H1 (cell line): ENCODE measurements at regions of chr9 and their contacts with region 1.

Region 1: GRCh38 chr9:121322037-121322775 is 47.8 kb downstream of the STOM start:
- DNase-seq: no peak
- H3K4me3 ChIP-seq: no peak overlapping the region
- H3K27ac ChIP-seq: no peak overlapping the region
- H3K4me1 ChIP-seq: no peaks in the 10 kb centered on the region
- H3K27me3 ChIP-seq: no peaks in the 10 kb centered on the region
- CTCF ChIP-seq: no peak
- EP300 ChIP-seq: no peak
- POLR2A ChIP-seq: no peak
- RAD21 ChIP-seq: no peak

Region 2: GRCh38 chr9:121267689-121268597 is 54.3 kb before region 1 on chr9 and contains the start of gene GSN:
- CTCF ChIA-PET with region 1: interaction called, 11 read pairs
- POLR2A ChIA-PET with region 1: no interaction called
- DNase-seq: peak in 1 of 2 experiments; percentile 86
- H3K4me3 ChIP-seq: peak within 1 kb of the TSS; percentile 63 to 94 (median 72)
- H3K27ac ChIP-seq: no peak within 1 kb of the TSS
- H3K4me1 ChIP-seq: peaks cover 4 to 31% (median 12%) of the 10 kb centered on the region in 4 experiments
- H3K27me3 ChIP-seq: peaks cover 0 to 30% (median 22%) of the 10 kb centered on the region in 4 experiments; a peak in 6 of 7 replicates
- CTCF ChIP-seq: peak in 2 of 3 experiments; percentile 0 to 32; a peak in 2 of 4 replicates
- EP300 ChIP-seq: no peak
- POLR2A ChIP-seq: 0 out of 3 replicates have a peak, but pooled peaks of 1 of the 2 experiments have one; percentile 8
- RAD21 ChIP-seq: peak in 1 of 2 experiments; percentile 7; a peak in 2 of 4 replicates
- total RNA-seq, gene GSN: 49.7 and 52.3 TPM in 2 replicates

Region 3: DNA sequence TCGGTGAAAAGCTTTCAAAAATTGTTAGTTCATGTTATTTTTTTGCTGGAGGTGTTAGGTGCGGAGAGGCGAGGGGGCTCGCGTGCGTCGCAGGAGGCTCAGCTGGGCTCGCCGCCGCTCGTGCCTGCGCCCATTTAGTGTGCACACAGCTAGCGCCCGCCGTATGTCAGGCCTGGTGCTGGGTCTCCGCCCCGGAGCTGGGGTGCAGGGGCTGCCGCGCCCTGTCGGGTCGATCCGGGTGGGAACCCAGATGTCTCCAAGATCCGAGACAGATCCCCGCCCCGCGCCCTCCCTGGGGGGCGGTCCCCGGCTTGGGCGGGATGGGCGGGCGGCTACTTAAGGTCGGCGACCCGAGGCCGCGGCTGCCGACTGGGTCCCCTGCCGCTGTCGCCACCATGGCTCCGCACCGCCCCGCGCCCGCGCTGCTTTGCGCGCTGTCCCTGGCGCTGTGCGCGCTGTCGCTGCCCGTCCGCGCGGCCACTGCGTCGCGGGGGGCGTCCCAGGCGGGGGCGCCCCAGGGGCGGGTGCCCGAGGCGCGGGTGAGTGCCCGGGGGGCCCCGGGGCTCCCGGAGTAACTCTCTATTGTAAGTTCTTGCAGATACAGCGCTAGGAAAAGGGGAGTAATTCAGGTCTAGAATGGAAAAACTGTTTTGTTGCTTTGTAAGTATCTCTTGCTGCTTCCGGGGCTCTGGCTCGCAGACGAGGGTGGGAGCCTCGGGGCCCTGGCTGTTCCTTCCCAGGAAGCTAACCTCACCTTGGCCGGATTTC is 22.6 kb before region 1 on chr9:
- CTCF ChIA-PET with region 1: interaction called, 35 read pairs
- POLR2A ChIA-PET with region 1: no interaction called
- DNase-seq: peak in 1 of 2 experiments; percentile 62
- H3K4me3 ChIP-seq: peak overlapping the region; percentile 29 to 63 (median 38)
- H3K27ac ChIP-seq: no peak overlapping the region
- H3K4me1 ChIP-seq: peaks cover 5 to 19% (median 12%) of the 10 kb centered on the region in 4 experiments
- H3K27me3 ChIP-seq: peaks cover 5 to 20% (median 14%) of the 10 kb centered on the region in 4 experiments
- CTCF ChIP-seq: no peak
- EP300 ChIP-seq: no peak
- POLR2A ChIP-seq: no peak
- RAD21 ChIP-seq: no peak

Region 4: DNA sequence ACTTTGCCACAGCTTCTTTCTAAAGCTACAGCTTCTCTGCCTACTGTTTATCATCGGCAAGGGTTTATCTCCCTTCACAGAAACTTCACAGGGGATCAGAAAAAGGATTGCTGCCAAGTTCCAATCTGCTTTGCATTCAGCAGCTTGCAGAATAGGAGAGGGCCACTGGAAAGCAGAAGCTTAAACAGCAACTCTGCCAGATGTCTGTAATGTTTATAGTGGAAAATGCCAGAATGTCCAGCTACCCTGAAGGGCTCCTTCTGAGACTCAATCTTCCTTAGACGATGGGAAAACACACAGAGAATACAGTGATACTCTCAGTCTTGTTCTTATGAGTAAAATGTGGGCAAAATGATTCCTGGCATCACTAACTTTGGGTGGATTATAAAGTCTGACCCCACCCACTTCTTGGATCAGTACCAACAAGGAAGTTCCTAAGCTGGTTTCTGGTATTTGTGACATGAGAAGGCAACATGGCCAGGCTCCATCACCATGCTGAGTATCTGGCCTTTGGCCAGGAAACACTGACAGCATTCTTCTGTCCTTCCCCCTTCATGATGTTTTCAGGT is 28.9 kb after region 1 on chr9:
- CTCF ChIA-PET with region 1: interaction called, 59 read pairs
- POLR2A ChIA-PET with region 1: no interaction called
- DNase-seq: no peak
- H3K4me3 ChIP-seq: no peak overlapping the region
- H3K27ac ChIP-seq: no peak overlapping the region
- H3K4me1 ChIP-seq: peaks cover 0 to 5% (median 0%) of the 10 kb centered on the region in 4 experiments; a peak in 1 of 7 replicates
- H3K27me3 ChIP-seq: no peaks in the 10 kb centered on the region
- CTCF ChIP-seq: no peak
- EP300 ChIP-seq: no peak
- POLR2A ChIP-seq: no peak
- RAD21 ChIP-seq: no peak

Region 5: DNA sequence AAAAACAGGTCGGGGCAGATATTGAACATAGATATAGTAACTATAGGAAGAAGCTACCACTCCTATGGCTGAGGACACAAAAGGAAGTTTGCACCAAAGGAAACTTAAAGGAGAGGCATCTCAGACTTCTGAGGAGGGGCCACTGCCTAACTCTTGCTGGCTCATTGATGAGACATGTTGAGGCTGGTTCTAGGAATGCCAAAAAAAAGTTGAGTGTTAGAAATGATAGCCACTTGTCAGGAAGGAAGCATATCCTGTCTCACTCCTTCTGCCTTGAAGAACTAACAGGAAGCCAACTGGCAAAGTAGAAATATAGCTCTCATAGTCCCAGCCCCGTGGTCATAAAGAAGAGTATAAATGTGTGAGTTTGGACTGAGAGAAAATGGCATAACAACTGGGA is 71.1 kb after region 1 on chr9:
- CTCF ChIA-PET with region 1: interaction called, 197 read pairs
- POLR2A ChIA-PET with region 1: no interaction called
- DNase-seq: no peak
- H3K4me3 ChIP-seq: no peak overlapping the region
- H3K27ac ChIP-seq: no peak overlapping the region
- H3K4me1 ChIP-seq: peaks cover 0 to 4% (median 0%) of the 10 kb centered on the region in 4 experiments; a peak in 2 of 7 replicates
- H3K27me3 ChIP-seq: no peaks in the 10 kb centered on the region
- CTCF ChIP-seq: no peak
- EP300 ChIP-seq: no peak
- POLR2A ChIP-seq: no peak
- RAD21 ChIP-seq: no peak

Region 6: GRCh38 chr9:121472446-121472845 is 150.2 kb after region 1 on chr9:
- CTCF ChIA-PET with region 1: no interaction called
- POLR2A ChIA-PET with region 1: no interaction called
- DNase-seq: no peak
- H3K4me3 ChIP-seq: no peak overlapping the region
- H3K27ac ChIP-seq: no peak overlapping the region
- H3K4me1 ChIP-seq: peaks cover 0 to 11% (median 3%) of the 10 kb centered on the region in 4 experiments; a peak in 4 of 7 replicates
- H3K27me3 ChIP-seq: no peaks in the 10 kb centered on the region
- CTCF ChIP-seq: no peak
- EP300 ChIP-seq: no peak
- POLR2A ChIP-seq: no peak
- RAD21 ChIP-seq: no peak

Region 7: DNA sequence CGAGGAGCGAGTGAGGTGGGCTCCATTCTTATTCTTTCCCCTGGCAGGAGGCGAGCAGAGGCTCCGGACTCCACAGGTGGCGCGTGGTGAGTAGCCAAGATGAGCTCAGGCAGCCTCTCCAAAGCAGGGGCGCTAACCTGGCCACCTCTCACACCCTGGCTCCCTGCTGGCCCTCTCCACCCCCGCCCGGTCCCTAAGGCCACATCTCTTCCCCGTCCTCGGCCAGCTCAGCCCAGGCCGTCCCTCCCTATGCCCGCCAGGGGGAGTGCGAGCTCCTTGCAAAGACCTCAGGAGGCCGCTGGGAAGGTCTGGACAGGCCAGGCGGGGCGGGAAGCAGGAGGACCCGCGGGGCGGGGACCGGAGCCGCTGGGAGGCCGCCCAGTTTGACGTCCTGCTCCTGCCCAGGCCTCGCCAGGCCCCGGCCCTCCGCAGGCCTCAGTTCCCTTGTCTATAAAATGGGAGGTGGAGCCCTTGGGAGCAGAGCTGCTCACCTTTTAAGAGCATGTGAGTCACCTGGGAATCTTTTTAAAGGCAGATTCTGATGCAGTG is 223.7 kb after region 1 on chr9:
- CTCF ChIA-PET with region 1: no interaction called
- POLR2A ChIA-PET with region 1: no interaction called
- DNase-seq: peak; percentile 87 to 97
- H3K4me3 ChIP-seq: peak overlapping the region in 1 of 4 experiments; percentile 42; a peak in 3 of 8 replicates
- H3K27ac ChIP-seq: no peak overlapping the region
- H3K4me1 ChIP-seq: peaks cover 0 to 5% (median under 1%) of the 10 kb centered on the region in 4 experiments; a peak in 2 of 7 replicates
- H3K27me3 ChIP-seq: peaks cover 0 to 6% (median 4%) of the 10 kb centered on the region in 4 experiments; a peak in 3 of 7 replicates
- CTCF ChIP-seq: peak; percentile 93 to 98 (median 97)
- EP300 ChIP-seq: peak in 1 of 2 experiments; percentile 22; a peak in 1 of 3 replicates
- POLR2A ChIP-seq: no peak
- RAD21 ChIP-seq: peak; percentile 95 to 99